Activated B cell treated with CpG ODN at 0.5 μM for 24 hours (primary cell): ENCODE measurements at regions of chr12 and their contacts with region 1.

Region 1: DNA sequence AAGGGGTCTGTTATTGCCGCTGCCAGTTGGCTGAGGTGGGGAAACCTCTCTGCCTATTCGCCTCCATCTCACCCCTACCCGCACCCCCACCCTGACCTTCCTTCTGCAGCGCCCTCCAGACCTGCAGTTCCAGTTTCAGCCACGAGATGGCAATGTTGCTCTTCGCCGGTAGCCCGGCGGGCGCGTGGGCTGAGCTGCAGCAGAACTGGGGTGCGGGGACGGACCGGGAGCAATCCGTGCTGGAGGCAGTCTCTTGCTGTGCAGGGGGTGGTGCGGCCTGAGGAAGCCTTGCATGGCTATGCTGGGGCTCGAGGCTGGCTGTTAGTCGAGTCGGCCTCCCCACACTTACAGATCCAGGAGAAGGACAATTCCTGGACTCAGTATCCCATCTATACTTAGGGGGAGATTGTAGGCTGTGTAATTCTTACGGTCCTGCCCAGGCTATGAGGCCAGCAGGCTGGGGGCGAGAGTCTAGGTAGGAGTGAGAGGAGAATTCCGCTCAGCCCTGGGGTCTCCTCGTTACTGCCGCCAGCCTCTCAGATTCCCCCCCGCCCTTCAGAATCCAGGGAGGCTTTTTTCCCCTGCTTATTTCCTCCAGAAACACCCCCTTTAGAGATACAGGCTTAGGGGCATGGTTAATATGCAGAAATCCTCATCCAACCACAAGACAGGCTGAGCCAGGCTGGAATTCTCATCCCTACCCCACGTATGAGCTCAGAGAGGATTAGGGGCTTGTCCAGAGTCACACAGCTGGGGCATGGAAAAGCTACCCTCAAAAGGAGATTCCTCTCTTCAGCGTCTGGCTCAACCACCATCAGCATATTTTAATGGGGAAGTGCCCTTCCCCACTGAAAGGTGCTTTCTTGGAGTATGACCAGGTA is 118.2 kb downstream of the AACS start:
- DNase-seq: peak; percentile 81
- ATAC-seq: peak; percentile 84
- H3K4me3 Mint-ChIP-seq: peak overlapping the region; percentile 16
- H3K27ac Mint-ChIP-seq: no peak overlapping the region
- H3K4me1 Mint-ChIP-seq: peaks cover 17% of the 10 kb centered on the region
- H3K27me3 Mint-ChIP-seq: peaks cover 58% of the 10 kb centered on the region
- CTCF ChIP-seq: peak; percentile 52

Region 2: GRCh38 chr12:125203145-125203765 is 19.8 kb after region 1 on chr12:
- CTCF ChIA-PET with region 1: interaction called, 14 read pairs
- POLR2A ChIA-PET with region 1: no interaction called
- intact Hi-C with region 1: loop called (anchors 2 kb)
- DNase-seq: no peak
- ATAC-seq: no peak
- H3K4me3 Mint-ChIP-seq: no peak overlapping the region
- H3K27ac Mint-ChIP-seq: no peak overlapping the region
- H3K4me1 Mint-ChIP-seq: no peaks in the 10 kb centered on the region
- H3K27me3 Mint-ChIP-seq: peaks cover 30% of the 10 kb centered on the region
- CTCF ChIP-seq: no peak

Region 3: DNA sequence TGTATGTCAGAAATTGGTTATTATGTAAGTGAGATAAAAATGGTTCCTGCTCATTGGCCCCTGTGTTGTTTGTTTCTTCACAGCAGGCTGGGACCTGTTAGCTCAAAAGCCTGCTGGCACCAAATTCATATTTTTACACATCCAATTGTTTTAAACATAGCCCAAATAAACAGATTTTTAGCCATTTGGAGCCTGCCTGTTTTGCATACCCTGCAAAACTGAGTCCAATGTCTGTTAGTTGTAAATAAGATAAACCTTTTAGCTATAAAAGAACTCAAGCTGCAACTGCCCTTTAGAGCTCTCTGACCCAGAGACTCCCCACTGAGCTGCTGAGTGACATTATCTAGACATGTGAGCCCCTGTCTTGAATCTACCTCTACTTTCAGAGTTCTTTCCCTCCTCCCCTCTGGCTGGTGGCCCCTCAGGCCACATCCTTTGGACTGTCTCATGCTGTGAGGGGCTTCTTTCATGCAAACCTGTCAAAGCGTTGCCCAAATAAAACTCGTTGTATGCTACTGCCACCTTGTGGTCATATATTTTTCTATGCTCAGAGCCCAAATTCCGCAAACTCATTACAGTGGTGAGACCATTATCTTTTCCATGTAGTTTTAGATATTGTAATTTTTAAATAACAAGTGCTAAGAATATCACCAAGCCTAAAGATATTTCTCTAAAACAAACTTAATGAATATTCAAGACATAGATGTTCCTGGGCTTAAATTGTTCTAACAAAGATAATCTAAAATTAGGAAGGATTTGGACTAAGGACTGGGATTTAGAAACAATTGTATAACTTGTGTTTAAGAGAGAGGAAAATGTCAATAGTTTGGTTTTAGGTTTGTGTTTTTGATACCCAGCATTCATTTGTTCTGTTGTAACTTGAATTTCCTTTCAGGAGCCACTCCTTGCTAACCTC is 219.7 kb after region 1 on chr12:
- CTCF ChIA-PET with region 1: interaction called, 16 read pairs
- POLR2A ChIA-PET with region 1: no interaction called
- intact Hi-C with region 1: loop called (anchors 1 kb)
- DNase-seq: no peak
- ATAC-seq: no peak
- H3K4me3 Mint-ChIP-seq: no peak overlapping the region
- H3K27ac Mint-ChIP-seq: no peak overlapping the region
- H3K4me1 Mint-ChIP-seq: peaks cover 11% of the 10 kb centered on the region
- H3K27me3 Mint-ChIP-seq: peaks cover 21% of the 10 kb centered on the region
- CTCF ChIP-seq: no peak

Region 4: DNA sequence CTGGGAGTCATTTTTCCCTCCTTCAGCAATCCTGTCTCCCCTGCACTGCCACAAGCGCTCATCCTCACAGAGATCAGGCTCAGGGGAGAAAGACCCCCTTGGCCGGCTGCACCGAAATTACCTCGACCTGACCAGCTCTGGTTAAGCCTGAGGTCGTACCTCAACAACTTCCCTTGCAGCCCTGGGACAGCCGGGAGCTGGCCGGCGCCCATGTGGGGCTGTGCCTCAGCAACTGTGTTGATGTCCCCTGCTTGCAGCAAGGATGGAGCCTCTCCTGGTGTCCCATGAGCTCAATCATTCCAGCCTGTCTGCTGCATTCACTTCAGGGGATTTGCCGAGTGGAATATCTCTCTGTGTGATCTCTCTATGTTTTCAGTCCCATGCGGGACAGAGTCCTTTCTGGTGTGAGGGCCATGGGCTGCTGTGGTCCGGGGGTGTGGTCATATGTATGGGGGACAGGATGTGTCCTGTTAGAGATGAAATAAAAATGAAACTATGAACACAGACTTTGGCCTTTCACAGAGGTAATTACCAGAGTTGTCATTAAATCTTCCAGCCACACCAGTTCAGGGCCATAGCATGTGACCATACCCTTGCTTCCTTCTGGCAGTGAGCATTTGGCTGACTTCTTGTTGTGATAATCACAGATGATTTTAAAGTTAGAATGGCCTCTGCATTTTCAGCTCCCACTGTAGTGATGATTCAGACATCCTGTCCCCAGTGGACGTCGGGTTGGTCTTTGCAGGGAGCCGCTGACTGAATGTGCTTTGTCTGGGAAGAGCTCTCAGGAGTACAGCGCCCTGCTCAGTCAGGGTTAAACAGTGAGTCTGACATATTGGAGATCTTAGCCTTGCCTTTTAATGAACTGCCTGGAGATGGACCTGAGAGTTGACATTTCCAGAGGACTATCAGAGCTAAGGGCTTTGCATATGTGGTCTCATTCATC is 287.7 kb after region 1 on chr12:
- CTCF ChIA-PET with region 1: no interaction called
- POLR2A ChIA-PET with region 1: no interaction called
- intact Hi-C with region 1: no loop called
- DNase-seq: no peak
- ATAC-seq: no peak
- H3K4me3 Mint-ChIP-seq: no peak overlapping the region
- H3K27ac Mint-ChIP-seq: no peak overlapping the region
- H3K4me1 Mint-ChIP-seq: no peaks in the 10 kb centered on the region
- H3K27me3 Mint-ChIP-seq: peaks cover 2% of the 10 kb centered on the region
- CTCF ChIP-seq: no peak